CD4-positive, alpha-beta memory T cell (primary cell): ENCODE measurements at regions of chr6 and their contacts with region 1.

Region 1: GRCh38 chr6:18264219-18264922 is at the start of gene DEK:
- DNase-seq: peak; percentile 79 to 90 (median 81)
- H3K4me3 ChIP-seq: peak within 1 kb of the TSS; percentile 82 to 89
- H3K4me3 Mint-ChIP-seq: peak within 1 kb of the TSS; percentile 95 to 98 (median 96)
- H3K27ac ChIP-seq: peak within 1 kb of the TSS; percentile 76
- H3K27ac Mint-ChIP-seq: peak within 1 kb of the TSS; percentile 96 to 99 (median 98)
- H3K4me1 ChIP-seq: peaks cover 57% of the 10 kb centered on the region
- H3K4me1 Mint-ChIP-seq: peaks cover 42 to 55% (median 49%) of the 10 kb centered on the region in 4 donors
- H3K27me3 ChIP-seq: no peaks in the 10 kb centered on the region
- H3K27me3 Mint-ChIP-seq: no peaks in the 10 kb centered on the region
- total RNA-seq, gene DEK: 128 to 131 TPM

Region 2: GRCh38 chr6:17758119-17758518 is 506.3 kb before region 1 on chr6:
- CTCF ChIA-PET with region 1: no interaction called
- POLR2A ChIA-PET with region 1: no interaction called
- intact Hi-C with region 1: no loop called
- DNase-seq: no peak
- H3K4me3 ChIP-seq: no peak overlapping the region
- H3K4me3 Mint-ChIP-seq: no peak overlapping the region
- H3K27ac ChIP-seq: no peak overlapping the region
- H3K27ac Mint-ChIP-seq: no peak overlapping the region
- H3K4me1 ChIP-seq: no peaks in the 10 kb centered on the region
- H3K4me1 Mint-ChIP-seq: no peaks in the 10 kb centered on the region
- H3K27me3 ChIP-seq: no peaks in the 10 kb centered on the region
- H3K27me3 Mint-ChIP-seq: peaks cover 2 to 16% of the 10 kb centered on the region in 2 donors

Region 3: DNA sequence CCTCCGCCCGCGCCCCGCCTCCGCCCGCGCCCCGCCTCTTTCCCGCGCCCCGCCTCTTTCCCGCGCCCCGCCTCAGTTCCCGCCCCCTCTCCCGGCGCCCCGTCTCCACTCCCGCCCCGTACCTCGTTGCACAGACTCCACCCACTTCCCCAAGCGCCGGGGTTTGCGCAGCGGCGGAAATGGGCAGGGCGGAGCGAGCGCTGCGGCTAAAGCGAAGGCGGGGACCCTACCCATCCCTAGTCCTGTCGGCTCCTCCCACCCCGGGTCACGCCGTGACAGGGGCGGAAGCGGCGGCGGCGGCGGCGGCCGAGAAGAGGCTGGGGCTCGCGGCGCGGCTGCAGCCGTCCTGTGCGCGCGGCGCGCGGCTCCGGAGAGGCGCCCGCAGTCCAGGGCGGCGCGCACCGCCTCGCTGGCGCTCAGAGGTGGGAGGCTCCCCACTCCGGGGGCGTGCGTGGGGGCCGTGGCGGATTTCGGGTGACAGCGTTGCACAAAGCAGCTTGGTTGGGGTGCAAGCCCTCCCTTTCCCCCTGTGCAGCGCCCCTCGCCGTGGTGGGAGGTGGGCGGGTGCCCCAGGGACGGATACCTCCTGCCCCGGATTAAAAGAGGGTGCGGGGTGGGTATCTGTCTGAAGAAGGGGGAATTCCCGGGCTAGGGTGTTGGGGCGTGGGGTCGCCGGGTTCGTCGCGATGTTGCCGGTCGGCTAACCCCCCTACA is 109.1 kb before region 1 on chr6 and contains the start of gene KDM1B:
- CTCF ChIA-PET with region 1: no interaction called
- POLR2A ChIA-PET with region 1: interaction called, 11 read pairs
- intact Hi-C with region 1: loop called (anchors 1 kb)
- DNase-seq: peak; percentile 98 to 100 (median 99)
- H3K4me3 ChIP-seq: peak within 1 kb of the TSS; percentile 92 to 98
- H3K4me3 Mint-ChIP-seq: peak within 1 kb of the TSS; percentile 98 to 99 (median 99)
- H3K27ac ChIP-seq: peak within 1 kb of the TSS; percentile 83
- H3K27ac Mint-ChIP-seq: peak within 1 kb of the TSS; percentile 84 to 100 (median 99)
- H3K4me1 ChIP-seq: peaks cover 29% of the 10 kb centered on the region
- H3K4me1 Mint-ChIP-seq: peaks cover 17 to 36% (median 28%) of the 10 kb centered on the region in 4 donors
- H3K27me3 ChIP-seq: no peaks in the 10 kb centered on the region
- H3K27me3 Mint-ChIP-seq: no peaks in the 10 kb centered on the region
- total RNA-seq, gene KDM1B: 12.0 to 12.3 TPM

Region 4: GRCh38 chr6:18242062-18242851 is 22.1 kb before region 1 on chr6:
- CTCF ChIA-PET with region 1: interaction called, 3 read pairs
- POLR2A ChIA-PET with region 1: interaction called, 5 read pairs
- intact Hi-C with region 1: loop called (anchors 2 kb)
- DNase-seq: no peak
- H3K4me3 ChIP-seq: no peak overlapping the region
- H3K4me3 Mint-ChIP-seq: peak overlapping the region in 4 of 8 donors; percentile 13 to 69 (median 41)
- H3K27ac ChIP-seq: no peak overlapping the region
- H3K27ac Mint-ChIP-seq: peak overlapping the region; percentile 19 to 90 (median 88)
- H3K4me1 ChIP-seq: peaks cover 28% of the 10 kb centered on the region
- H3K4me1 Mint-ChIP-seq: peaks cover 38 to 57% (median 45%) of the 10 kb centered on the region in 4 donors
- H3K27me3 ChIP-seq: no peaks in the 10 kb centered on the region
- H3K27me3 Mint-ChIP-seq: no peaks in the 10 kb centered on the region

Region 5: GRCh38 chr6:18387061-18387721 is 122.8 kb after region 1 on chr6 and contains the start of gene RNF144B:
- CTCF ChIA-PET with region 1: no interaction called
- POLR2A ChIA-PET with region 1: interaction called, 3 read pairs
- intact Hi-C with region 1: loop called (anchors 5 kb)
- DNase-seq: peak; percentile 54 to 70 (median 58)
- H3K4me3 ChIP-seq: peak within 1 kb of the TSS; percentile 65 to 95
- H3K4me3 Mint-ChIP-seq: peak within 1 kb of the TSS; percentile 95 to 100 (median 99)
- H3K27ac ChIP-seq: peak within 1 kb of the TSS; percentile 43
- H3K27ac Mint-ChIP-seq: peak within 1 kb of the TSS; percentile 61 to 92 (median 87)
- H3K4me1 ChIP-seq: peaks cover 24% of the 10 kb centered on the region
- H3K4me1 Mint-ChIP-seq: peaks cover 18 to 33% (median 23%) of the 10 kb centered on the region in 4 donors
- H3K27me3 ChIP-seq: no peaks in the 10 kb centered on the region
- H3K27me3 Mint-ChIP-seq: peaks cover 0 to 3% of the 10 kb centered on the region in 2 donors
- total RNA-seq, gene RNF144B: 3.2 to 5.8 TPM

Region 6: GRCh38 chr6:18503593-18504231 is 239.3 kb after region 1 on chr6:
- CTCF ChIA-PET with region 1: interaction called, 3 read pairs
- POLR2A ChIA-PET with region 1: no interaction called
- intact Hi-C with region 1: loop called (anchors 1 kb)
- DNase-seq: peak in 4 of 5 donors; percentile 37 to 39 (median 38)
- H3K4me3 ChIP-seq: no peak overlapping the region
- H3K4me3 Mint-ChIP-seq: peak overlapping the region in 3 of 8 donors; percentile 6 to 52 (median 32)
- H3K27ac ChIP-seq: no peak overlapping the region
- H3K27ac Mint-ChIP-seq: no peak overlapping the region
- H3K4me1 ChIP-seq: no peaks in the 10 kb centered on the region
- H3K4me1 Mint-ChIP-seq: peaks cover 0 to 3% (median 0%) of the 10 kb centered on the region in 4 donors
- H3K27me3 ChIP-seq: no peaks in the 10 kb centered on the region
- H3K27me3 Mint-ChIP-seq: peaks cover 0 to 2% of the 10 kb centered on the region in 2 donors

Region 7: DNA sequence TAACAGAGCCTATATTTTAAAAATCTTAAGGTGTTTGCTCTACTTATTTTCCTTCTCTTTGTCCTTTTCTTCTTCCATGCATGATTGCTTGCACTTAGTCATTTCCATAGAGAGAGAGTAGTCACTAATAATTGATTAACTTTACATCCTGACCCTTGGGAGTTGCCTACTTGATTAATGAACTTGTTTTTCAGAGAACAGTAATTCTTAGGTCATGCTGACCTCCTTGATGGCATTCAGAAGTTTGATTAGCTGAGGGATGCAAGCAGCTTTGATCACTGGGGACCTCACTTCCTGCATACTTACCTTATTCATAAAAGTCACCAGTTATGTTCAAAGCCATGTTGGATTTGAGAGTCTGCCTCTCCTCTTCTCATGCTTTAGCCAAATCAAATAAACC is 857.1 kb after region 1 on chr6:
- CTCF ChIA-PET with region 1: no interaction called
- POLR2A ChIA-PET with region 1: no interaction called
- intact Hi-C with region 1: no loop called
- DNase-seq: no peak
- H3K4me3 ChIP-seq: no peak overlapping the region
- H3K4me3 Mint-ChIP-seq: no peak overlapping the region
- H3K27ac ChIP-seq: no peak overlapping the region
- H3K27ac Mint-ChIP-seq: no peak overlapping the region
- H3K4me1 ChIP-seq: no peaks in the 10 kb centered on the region
- H3K4me1 Mint-ChIP-seq: no peaks in the 10 kb centered on the region
- H3K27me3 ChIP-seq: no peaks in the 10 kb centered on the region
- H3K27me3 Mint-ChIP-seq: no peaks in the 10 kb centered on the region